Activated T-helper 2 cell treated with anti-CD3 and anti-CD28 coated beads, Interferon-gamma antibody, Interleukin-2, Interleukin-4, amounts not matched to agents 10 μg/mL and 5 μg/mL and 100 μg/mL, durations not matched to agents 14 hours and 24 hours and 36 hours (primary cell): ENCODE measurements at regions of chr3 and their contacts with region 1.

Region 1: DNA sequence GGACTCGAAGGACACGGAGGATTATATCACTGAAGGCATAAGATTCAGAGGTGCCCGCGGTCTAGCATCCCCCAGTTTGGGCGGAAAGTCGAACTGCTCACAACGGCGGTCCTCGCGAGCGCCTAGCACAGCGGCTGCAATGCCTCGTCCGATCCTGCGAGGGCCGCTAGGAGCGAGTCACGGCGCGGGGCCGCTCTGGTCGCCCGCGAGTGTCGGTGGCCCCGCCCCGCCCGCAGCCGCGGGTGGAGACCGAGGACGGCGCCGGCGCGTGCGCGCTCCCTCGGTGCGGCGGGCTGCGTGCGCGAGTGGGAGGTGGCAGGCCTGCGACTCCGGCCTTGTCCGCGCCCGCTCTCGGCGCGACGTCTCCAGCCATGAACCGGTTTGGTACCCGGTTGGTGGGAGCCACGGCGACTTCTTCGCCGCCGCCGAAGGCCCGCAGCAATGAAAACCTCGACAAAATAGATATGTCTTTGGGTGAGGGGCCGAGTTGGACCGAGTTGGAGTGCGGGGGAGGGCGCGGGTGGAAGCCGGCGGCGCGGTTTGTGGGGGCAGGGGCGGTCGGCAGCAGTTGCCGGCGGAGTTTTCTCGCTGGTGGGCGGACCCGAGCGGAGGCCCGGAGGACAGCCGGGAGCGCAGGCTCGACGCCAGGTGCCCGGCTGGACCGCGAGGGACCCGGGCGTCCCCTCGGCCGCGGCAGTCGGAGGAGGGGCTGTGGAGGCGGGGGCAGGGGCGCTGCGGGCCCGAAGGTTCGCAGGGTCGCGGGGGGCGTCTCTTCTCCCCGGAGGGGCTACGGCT is at the start of gene FYTTD1:
- DNase-seq: peak; percentile 81
- H3K4me3 Mint-ChIP-seq: peak within 1 kb of the TSS; percentile 93
- H3K27ac Mint-ChIP-seq: peak within 1 kb of the TSS; percentile 93
- H3K4me1 Mint-ChIP-seq: peaks cover 30% of the 10 kb centered on the region
- H3K27me3 Mint-ChIP-seq: peaks cover 4% of the 10 kb centered on the region
- total RNA-seq, gene FYTTD1: 57.5 and 63.0 TPM in 2 replicates

Region 2: DNA sequence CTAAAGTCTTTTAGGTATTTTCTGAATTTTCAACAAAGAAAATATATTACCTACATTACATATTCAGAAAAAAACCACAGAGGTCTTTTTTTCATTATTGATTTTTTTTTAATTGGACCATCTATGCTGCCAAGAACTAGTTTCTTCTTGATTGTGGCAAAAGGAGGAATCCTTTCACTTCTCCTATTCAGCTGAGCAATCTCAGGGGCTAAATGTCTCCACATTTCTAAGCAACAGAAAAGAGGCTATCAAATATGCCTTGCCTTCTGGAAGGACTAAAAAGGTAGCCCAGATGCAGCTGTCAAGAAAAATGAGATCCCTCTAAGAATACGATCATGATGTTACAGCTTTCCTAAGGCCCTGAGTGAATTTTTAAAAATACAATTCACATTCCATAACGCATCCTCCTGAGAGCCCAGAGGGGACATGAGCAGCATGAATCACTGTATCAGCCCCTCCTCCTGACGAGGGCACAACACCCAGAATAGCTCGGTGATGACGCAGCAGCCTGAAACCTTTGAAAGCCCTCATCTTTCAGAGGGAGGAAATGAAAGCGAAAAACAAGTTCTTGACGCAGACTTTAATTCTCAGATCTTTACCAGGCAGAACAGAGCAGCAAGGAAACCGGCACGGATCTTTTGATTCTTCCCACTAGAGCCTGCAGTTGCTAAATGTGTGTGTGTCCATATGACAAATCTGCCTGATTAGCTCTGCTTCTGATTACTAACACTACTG is 37.7 kb before region 1 on chr3:
- intact Hi-C with region 1: loop called (anchors 1 kb)
- DNase-seq: peak; percentile 80
- H3K4me3 Mint-ChIP-seq: peak overlapping the region; percentile 75
- H3K27ac Mint-ChIP-seq: peak overlapping the region; percentile 92
- H3K4me1 Mint-ChIP-seq: peaks cover 33% of the 10 kb centered on the region
- H3K27me3 Mint-ChIP-seq: no peaks in the 10 kb centered on the region

Region 3: GRCh38 chr3:197736491-197737318 is 13.1 kb before region 1 on chr3 and contains the start of gene RUBCN:
- intact Hi-C with region 1: loop called (anchors 1 kb)
- DNase-seq: peak; percentile 93
- H3K4me3 Mint-ChIP-seq: peak within 1 kb of the TSS; percentile 93
- H3K27ac Mint-ChIP-seq: peak within 1 kb of the TSS; percentile 91
- H3K4me1 Mint-ChIP-seq: peaks cover 25% of the 10 kb centered on the region
- H3K27me3 Mint-ChIP-seq: no peaks in the 10 kb centered on the region
- total RNA-seq, gene RUBCN: 41.7 and 43.6 TPM in 2 replicates

Region 4: GRCh38 chr3:197801891-197802778 is 52.3 kb after region 1 on chr3:
- intact Hi-C with region 1: loop called (anchors 2 kb)
- DNase-seq: no peak
- H3K4me3 Mint-ChIP-seq: no peak overlapping the region
- H3K27ac Mint-ChIP-seq: peak overlapping the region; percentile 23
- H3K4me1 Mint-ChIP-seq: peaks cover 38% of the 10 kb centered on the region
- H3K27me3 Mint-ChIP-seq: no peaks in the 10 kb centered on the region

Region 5: GRCh38 chr3:197847866-197848401 is 98.1 kb after region 1 on chr3:
- intact Hi-C with region 1: loop called (anchors 5 kb)
- DNase-seq: no peak
- H3K4me3 Mint-ChIP-seq: peak overlapping the region; percentile 63
- H3K27ac Mint-ChIP-seq: peak overlapping the region; percentile 74
- H3K4me1 Mint-ChIP-seq: peaks cover 25% of the 10 kb centered on the region
- H3K27me3 Mint-ChIP-seq: no peaks in the 10 kb centered on the region

Region 6: DNA sequence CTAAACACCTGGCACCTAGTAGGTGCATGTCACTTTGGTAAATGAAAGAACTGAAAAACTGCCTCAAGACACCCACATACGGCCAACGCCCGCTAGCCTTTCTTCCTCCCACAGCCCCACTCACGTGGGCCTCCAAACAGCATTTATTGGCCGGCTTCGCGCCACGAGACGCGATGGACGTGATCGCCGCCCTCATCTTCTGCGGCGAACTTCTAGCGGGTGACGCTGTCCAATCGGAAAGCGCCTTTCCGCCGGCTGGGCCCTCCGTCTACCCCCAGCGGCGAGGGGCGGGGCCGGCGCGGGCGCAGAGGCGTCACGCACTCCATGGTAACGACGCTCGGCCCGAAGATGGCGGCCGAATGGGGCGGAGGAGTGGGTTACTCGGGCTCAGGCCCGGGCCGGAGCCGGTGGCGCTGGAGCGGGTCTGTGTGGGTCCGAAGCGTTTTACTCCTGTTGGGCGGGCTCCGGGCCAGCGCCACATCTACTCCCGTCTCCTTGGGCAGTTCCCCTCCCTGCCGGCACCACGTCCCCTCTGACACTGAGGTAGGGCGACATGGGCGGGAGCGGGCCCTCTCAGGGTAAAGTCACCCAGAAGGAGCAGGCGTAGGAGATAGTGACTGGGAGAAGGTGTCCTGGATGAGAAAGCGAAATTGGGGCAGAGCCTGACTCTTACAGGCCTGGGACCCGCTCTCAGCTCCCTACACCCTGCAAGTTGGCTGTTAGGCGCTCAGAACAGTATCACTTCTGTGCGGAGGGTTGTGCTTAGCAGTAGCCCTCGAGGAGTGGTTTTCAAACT is 210.3 kb after region 1 on chr3 and contains the start of gene LMLN:
- intact Hi-C with region 1: loop called (anchors 5 kb)
- DNase-seq: peak; percentile 95
- H3K4me3 Mint-ChIP-seq: peak within 1 kb of the TSS; percentile 88
- H3K27ac Mint-ChIP-seq: peak within 1 kb of the TSS; percentile 92
- H3K4me1 Mint-ChIP-seq: peaks cover 39% of the 10 kb centered on the region
- H3K27me3 Mint-ChIP-seq: peaks cover 2% of the 10 kb centered on the region
- total RNA-seq, gene LMLN: 4.3 and 4.4 TPM in 2 replicates